Activated CD4-positive, alpha-beta T cell treated with anti-CD3 and anti-CD28 coated beads for 36 hours (primary cell): ENCODE measurements at regions of chr20 and their contacts with region 1.

Region 1: DNA sequence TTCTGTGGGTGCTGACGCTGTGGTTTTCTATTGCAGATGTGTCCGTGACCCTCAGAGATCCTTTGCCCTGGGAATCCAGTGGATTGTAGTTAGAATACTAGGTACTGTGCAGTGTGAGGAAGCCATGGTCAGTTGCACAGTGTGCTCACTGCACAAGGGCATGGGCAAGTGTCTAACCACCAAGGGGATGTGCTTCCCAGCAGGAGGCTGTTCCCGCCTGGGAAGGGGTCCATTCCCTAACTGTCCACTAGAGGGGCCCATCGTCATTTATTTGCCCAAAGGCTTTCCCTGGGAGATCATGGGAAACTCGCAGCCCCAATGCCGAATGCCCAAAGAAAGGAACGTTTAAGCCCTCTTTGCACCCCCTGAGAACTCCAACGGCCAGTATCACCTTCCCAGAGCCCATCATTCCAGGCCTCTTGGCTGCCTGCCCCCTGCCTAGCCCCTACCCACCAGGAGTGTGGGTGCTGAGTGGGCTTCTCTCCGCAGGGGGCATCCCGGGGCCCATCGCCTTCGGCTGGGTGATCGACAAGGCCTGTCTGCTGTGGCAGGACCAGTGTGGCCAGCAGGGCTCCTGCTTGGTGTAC is 26.2 kb downstream of the SLCO4A1 start:
- DNase-seq: peak; percentile 45
- ATAC-seq: no peak
- H3K4me3 Mint-ChIP-seq: no peak overlapping the region
- H3K27ac Mint-ChIP-seq: no peak overlapping the region
- H3K4me1 Mint-ChIP-seq: no peaks in the 10 kb centered on the region
- H3K27me3 Mint-ChIP-seq: no peaks in the 10 kb centered on the region

Region 2: GRCh38 chr20:62768481-62769287 is 100.2 kb after region 1 on chr20:
- CTCF ChIA-PET with region 1: no interaction called
- POLR2A ChIA-PET with region 1: no interaction called
- intact Hi-C with region 1: no loop called
- DNase-seq: no peak
- ATAC-seq: no peak
- H3K4me3 Mint-ChIP-seq: no peak overlapping the region
- H3K27ac Mint-ChIP-seq: no peak overlapping the region
- H3K4me1 Mint-ChIP-seq: peaks cover 21% of the 10 kb centered on the region
- H3K27me3 Mint-ChIP-seq: no peaks in the 10 kb centered on the region

Region 3: GRCh38 chr20:62808211-62808865 is 139.8 kb after region 1 on chr20:
- CTCF ChIA-PET with region 1: interaction called, 3 read pairs
- POLR2A ChIA-PET with region 1: no interaction called
- intact Hi-C with region 1: loop called in 1 of 2 experiments (anchors 1 kb)
- DNase-seq: peak; percentile 86
- ATAC-seq: peak; percentile 67
- H3K4me3 Mint-ChIP-seq: no peak overlapping the region
- H3K27ac Mint-ChIP-seq: no peak overlapping the region
- H3K4me1 Mint-ChIP-seq: peaks cover 21% of the 10 kb centered on the region
- H3K27me3 Mint-ChIP-seq: no peaks in the 10 kb centered on the region